Heart right ventricle (tissue), 16 donors: ENCODE measurements at regions of chr3 and their contacts with region 1.

Region 1: GRCh38 chr3:148379763-148380382 is 317.8 kb upstream of the AGTR1 start:
- DNase-seq: no peak
- ATAC-seq: peak in 4 of 8 donors; percentile 42 to 74 (median 56)
- H3K4me3 ChIP-seq: no peak overlapping the region
- H3K27ac ChIP-seq: no peak overlapping the region
- H3K4me1 ChIP-seq: no peaks in the 10 kb centered on the region
- H3K27me3 ChIP-seq: no peaks in the 10 kb centered on the region
- CTCF ChIP-seq: peak in 7 of 9 donors; percentile 35 to 57 (median 48)

Region 2: DNA sequence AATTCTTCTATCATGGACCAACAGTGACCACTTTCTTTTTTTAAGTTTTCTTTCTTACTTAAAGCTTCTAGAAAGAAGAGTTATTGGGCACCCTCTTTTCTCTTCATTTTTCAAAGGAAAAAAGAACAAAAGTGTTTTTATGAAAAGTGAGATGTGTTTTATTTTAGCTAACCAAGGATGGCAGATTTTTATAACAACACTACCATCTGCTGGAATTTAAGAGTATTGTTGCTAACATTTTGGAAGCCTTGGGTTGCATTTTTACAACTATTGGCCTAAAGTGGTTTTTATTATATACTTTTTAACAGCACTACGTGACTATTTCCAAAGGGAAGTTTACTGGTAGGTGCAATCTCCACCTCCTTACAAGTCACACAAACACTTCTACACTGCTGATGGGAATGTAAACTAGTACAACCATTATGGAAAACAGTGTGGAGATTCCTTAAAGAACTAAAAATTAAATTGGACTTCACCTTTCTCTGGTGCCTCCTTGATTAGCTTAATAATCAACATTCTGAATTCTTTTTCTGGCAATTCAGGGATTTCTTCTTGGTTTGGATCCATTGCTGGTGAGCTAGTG is 80.1 kb after region 1 on chr3:
- intact Hi-C with region 1: loop called in 1 of 10 experiments (anchors 2 kb)
- DNase-seq: no peak
- ATAC-seq: no peak
- H3K4me3 ChIP-seq: no peak overlapping the region
- H3K27ac ChIP-seq: no peak overlapping the region
- H3K4me1 ChIP-seq: no peaks in the 10 kb centered on the region
- H3K27me3 ChIP-seq: no peaks in the 10 kb centered on the region
- CTCF ChIP-seq: peak in 4 of 9 donors; percentile 17 to 34 (median 26)

Region 3: DNA sequence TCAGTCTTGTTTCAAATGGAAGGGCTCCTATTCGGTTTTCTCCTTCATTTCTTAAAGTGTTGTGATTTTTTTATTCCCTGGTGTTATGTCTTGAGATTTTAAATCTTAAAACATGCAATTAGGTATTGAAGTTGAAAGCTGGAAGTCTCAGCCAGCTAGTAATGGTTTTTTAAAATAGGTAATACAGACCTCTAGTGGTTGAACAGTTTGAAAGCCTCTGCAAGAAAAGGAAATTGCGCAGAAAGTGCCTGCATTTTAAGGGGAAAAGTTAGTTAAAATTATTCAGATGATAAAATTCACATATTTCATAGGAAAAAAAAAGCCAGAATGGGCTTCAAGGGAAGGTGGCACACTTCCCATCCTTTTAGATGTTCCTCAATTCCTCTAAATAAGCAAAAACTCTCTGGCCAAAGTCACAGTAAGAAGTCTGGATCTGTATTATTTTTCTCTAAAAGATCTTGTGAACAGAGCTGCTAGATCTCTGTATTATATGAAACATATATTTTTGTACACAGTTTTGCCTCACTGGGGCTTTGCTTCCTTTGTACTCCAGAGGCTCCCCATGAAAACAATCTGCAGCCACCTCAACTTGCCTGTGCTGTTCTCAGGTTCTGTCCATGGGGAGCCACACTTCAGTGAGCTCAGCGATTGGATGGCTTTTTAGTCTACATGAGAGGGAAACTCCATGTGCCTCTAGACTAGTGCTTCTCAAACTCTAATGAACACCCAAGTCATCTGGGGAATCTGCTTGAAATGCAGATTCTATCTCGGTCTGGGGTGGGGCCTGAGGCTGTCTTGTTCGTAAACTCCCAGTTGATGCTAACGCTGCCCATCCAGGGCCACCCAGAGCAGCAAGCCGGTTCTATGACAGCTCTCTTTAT is 339.3 kb after region 1 on chr3:
- intact Hi-C with region 1: loop called in 7 of 10 experiments (anchors 2 to 10 kb)
- DNase-seq: no peak
- ATAC-seq: no peak
- H3K4me3 ChIP-seq: no peak overlapping the region
- H3K27ac ChIP-seq: no peak overlapping the region
- H3K4me1 ChIP-seq: no peaks in the 10 kb centered on the region
- H3K27me3 ChIP-seq: no peaks in the 10 kb centered on the region
- CTCF ChIP-seq: peak in 7 of 9 donors; percentile 30 to 59 (median 45)

Region 4: DNA sequence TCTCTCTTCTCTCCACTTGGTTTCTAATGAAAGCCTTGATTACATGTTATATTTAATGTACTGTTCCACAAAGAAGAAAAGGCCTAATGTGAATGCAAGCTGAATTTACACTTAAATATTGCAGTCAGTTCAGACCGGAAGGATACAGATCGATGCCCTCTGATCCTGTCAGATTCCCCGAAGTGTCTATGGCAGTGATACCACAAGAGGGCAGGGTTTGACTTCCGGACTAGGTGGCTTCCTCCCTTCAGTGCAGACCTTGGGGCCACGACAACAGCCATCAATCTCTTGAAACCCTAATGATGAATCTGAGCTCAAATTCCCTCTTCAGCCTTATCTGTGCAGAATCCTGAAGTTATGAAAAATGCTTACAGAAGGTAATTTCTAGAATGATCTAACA is 347.4 kb after region 1 on chr3:
- intact Hi-C with region 1: loop called in 1 of 10 experiments (anchors 10 kb)
- DNase-seq: no peak
- ATAC-seq: no peak
- H3K4me3 ChIP-seq: no peak overlapping the region
- H3K27ac ChIP-seq: no peak overlapping the region
- H3K4me1 ChIP-seq: peaks cover 0 to 10% (median 0%) of the 10 kb centered on the region in 9 donors
- H3K27me3 ChIP-seq: no peaks in the 10 kb centered on the region
- CTCF ChIP-seq: peak in 4 of 9 donors; percentile 12 to 40 (median 16)

Region 5: GRCh38 chr3:148943506-148944205 is 563.8 kb after region 1 on chr3:
- intact Hi-C with region 1: loop called in 5 of 10 experiments (anchors 5 kb)
- DNase-seq: peak in 1 of 2 donors; percentile 29
- ATAC-seq: peak; percentile 74 to 93 (median 82)
- H3K4me3 ChIP-seq: no peak overlapping the region
- H3K27ac ChIP-seq: no peak overlapping the region
- H3K4me1 ChIP-seq: peaks cover 0 to 3% (median 0%) of the 10 kb centered on the region in 9 donors
- H3K27me3 ChIP-seq: no peaks in the 10 kb centered on the region
- CTCF ChIP-seq: peak; percentile 37 to 77 (median 72)